Dorsolateral prefrontal cortex (tissue), 120 donors: ENCODE measurements at regions of chr1 and their contacts with region 1.

Region 1: DNA sequence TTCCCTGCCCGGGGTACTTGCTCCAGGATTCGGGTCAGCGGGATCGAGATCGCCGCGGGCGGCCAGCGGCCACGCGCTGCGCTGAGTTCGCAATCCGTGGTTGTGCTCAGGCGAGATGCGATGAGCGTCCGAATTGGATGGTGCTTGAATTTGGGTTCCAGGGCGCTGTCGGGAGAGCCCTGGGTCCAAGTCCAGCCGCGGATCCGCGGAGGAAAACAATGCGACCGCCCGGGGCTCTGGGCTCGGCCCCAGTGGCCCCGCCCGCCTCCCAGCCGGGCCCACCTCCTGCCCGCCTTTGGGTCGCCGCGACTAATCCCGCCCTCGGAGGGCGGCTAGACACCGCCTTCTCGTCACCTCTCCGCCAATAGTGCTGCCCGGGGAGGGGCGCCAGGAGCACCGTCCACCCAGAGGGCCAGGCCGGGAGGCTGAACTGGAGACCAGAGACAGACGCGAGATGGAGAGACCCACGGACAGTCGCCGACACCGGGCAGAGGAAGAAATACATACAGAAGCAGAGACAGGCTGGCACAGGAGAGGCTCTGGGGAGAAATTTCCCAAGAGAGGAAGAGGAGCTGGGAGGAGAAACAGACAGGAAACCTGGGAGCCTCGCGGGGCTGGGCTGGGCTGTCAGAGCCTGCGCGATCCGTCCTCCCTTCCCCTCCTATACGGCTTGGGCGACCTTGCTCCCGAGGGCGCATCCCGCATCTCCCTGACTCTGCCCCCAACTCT is at the start of gene SEMA6C:
- DNase-seq: peak; percentile 92 to 99 (median 96)
- H3K4me3 ChIP-seq: peak within 1 kb of the TSS; percentile 59 to 96 (median 84)
- H3K27ac ChIP-seq: peak within 1 kb of the TSS; percentile 31 to 93 (median 85)
- H3K27me3 ChIP-seq: no peaks in the 10 kb centered on the region
- CTCF ChIP-seq: peak in 25 of 56 donors; percentile 3 to 59 (median 23)
- total RNA-seq, gene SEMA6C: 12.8 to 41.0 (median 24.6) TPM

Region 2: GRCh38 chr1:151047925-151048645 is 98.5 kb before region 1 on chr1:
- intact Hi-C with region 1: loop called in 1 of 2 experiments (anchors 5 kb)
- DNase-seq: peak; percentile 53 to 84 (median 72)
- H3K4me3 ChIP-seq: peak overlapping the region; percentile 66 to 99 (median 88)
- H3K27ac ChIP-seq: peak overlapping the region; percentile 83 to 99 (median 94)
- H3K27me3 ChIP-seq: no peaks in the 10 kb centered on the region
- CTCF ChIP-seq: peak in 37 of 56 donors; percentile 19 to 62 (median 52)

Region 3: GRCh38 chr1:151059078-151059907 is 87.3 kb before region 1 on chr1 and contains the start of gene CDC42SE1:
- intact Hi-C with region 1: loop called in 1 of 2 experiments (anchors 5 kb)
- DNase-seq: peak; percentile 55 to 90 (median 82)
- H3K4me3 ChIP-seq: peak within 1 kb of the TSS; percentile 62 to 99 (median 87)
- H3K27ac ChIP-seq: peak within 1 kb of the TSS; percentile 82 to 99 (median 96)
- H3K27me3 ChIP-seq: no peaks in the 10 kb centered on the region
- CTCF ChIP-seq: peak; percentile 57 to 92 (median 76)
- total RNA-seq, gene CDC42SE1: 46.3 to 92.3 (median 62.6) TPM

Region 4: DNA sequence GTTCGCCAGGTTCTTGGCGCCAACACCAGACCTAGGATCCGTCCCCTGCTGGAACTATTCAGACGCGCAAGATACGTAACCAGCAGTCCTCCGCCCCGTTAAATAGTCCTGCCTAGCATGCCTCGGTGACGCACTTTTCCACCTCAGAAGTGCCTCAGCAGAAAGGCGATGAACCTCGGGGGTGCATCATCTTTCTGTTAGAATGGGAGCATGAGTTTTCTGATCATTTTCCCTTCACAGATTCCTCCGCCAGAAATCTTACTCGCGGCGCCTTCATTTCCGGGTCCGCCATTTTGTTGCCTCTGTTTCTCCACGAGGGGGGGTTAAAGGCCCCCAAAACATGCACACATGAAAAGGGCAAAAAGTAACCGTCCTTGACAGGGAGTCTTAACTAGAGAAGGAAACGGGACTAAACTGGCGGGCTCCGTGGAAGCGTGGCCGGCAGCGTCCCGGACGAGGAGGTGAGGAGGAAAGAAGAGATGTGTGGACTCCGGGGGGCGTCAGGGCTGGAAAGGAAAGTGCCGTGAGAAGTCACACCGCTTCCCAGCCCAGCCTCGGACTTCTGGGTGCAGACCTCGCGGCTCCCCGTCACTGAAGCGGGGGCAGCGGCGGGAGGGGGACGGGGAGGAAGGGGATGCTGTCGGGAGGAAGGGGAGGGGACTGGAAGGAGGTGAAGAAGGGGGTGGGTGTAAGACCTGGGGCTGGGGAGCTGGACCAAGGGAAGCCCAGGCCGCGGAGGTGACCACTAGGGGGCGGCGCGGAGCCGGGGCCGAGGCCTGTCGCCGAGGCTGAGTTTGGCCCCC is 75.9 kb before region 1 on chr1 and contains the start of gene GABPB2:
- intact Hi-C with region 1: loop called in 1 of 2 experiments (anchors 5 kb)
- DNase-seq: peak; percentile 84 to 94 (median 90)
- H3K4me3 ChIP-seq: peak within 1 kb of the TSS; percentile 52 to 98 (median 81)
- H3K27ac ChIP-seq: peak within 1 kb of the TSS; percentile 97 to 100 (median 100)
- H3K27me3 ChIP-seq: no peaks in the 10 kb centered on the region
- CTCF ChIP-seq: peak; percentile 56 to 98 (median 87)
- total RNA-seq, gene GABPB2: 11.6 to 37.2 (median 20.4) TPM

Region 5: DNA sequence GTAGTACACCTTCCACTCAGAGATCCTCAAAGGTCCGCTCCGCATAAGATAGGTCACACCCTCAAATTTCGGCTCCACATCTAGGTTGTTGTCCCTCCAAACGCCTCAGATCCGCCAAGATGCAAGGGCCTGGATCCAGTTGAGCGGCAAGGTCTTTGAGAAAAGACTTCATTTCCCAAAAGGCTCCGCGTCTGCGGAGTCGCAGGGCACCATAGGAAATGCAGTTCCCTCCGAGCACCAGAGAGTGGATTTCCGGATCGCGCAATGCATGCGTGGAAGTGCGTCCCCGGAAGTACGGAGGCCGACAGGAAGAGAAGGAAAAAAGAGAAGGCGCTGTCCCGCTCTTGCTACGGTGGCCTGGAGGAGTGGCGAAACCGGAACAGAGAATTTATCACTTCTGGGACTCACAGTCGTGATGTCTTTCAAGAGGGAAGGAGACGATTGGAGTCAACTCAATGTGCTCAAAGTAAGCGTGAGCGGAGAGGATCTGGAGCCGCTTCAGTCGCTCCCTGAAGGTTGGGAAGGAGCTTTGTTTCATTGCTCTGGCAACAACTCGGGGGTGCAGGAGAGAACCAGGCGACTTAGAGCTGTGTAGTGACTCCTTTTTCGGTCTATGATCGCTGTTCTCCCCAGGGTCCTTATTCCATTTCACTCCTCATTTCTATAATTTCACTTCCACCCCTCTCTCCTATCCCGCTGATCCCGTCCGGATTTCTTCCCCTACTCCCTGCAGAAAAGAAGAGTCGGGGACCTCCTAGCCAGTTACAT is 19.3 kb after region 1 on chr1 and contains the starts of genes LYSMD1 and SCNM1:
- intact Hi-C with region 1: loop called in 1 of 2 experiments (anchors 2 kb)
- DNase-seq: peak; percentile 94 to 98 (median 96)
- H3K4me3 ChIP-seq: peak within 1 kb of the TSS; percentile 57 to 98 (median 81)
- H3K27ac ChIP-seq: peak within 1 kb of the TSS; percentile 30 to 98 (median 89)
- H3K27me3 ChIP-seq: no peaks in the 10 kb centered on the region
- CTCF ChIP-seq: peak in 46 of 56 donors; percentile 7 to 64 (median 40)
- total RNA-seq, gene LYSMD1: 11.8 to 24.4 (median 17.1) TPM
- total RNA-seq, gene SCNM1: 20.8 to 38.5 (median 28.7) TPM

Region 6: DNA sequence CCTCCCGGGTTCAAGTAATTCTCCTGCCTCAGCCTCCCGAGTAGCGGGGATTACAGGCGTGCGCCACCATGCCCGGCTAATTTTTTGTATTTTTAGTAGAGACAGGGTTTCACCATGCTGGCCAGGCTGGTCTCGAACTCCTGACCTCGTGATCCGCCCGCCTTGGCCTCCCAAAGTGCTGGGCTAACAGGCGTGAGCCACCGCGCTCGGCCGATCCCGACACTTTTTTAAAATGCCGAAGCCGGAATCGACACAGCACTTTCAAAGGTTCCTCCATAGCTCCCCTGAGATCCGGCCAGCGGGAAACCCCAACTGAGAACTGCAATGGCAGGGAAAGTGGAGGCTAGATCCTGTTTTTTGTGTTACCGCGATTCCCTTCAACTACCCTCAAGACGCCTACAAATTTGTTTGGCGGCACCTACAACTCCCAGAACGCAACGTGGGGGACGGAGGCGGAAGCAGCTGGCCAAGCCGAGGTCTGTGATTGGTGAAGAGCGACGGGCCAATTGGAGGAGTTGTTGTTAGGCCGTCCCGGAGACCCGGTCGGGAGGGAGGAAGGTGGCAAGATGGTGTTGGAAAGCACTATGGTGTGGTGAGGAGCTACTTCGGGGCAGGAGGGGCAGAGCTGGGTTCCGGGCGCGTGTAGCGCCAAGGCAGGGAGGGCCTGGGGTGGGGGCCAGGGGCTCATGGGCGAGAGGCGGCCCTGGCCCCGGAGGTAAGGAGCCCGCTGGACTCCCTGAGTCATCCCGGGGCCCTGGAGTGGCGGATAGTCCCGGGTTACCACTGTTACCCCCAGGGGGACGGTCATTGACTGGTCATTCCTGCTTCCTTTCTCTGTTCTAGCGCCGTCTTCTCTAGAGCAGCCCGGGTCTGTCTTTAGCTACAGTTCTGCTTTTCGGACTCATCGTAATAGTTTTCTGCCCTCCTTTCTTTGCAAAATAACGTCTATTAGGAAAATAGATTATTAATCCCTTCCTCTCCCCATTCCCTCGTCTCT is 107.9 kb after region 1 on chr1 and contains the start of gene PSMD4:
- intact Hi-C with region 1: no loop called
- DNase-seq: peak; percentile 83 to 96 (median 94)
- H3K4me3 ChIP-seq: peak within 1 kb of the TSS; percentile 70 to 100 (median 97)
- H3K27ac ChIP-seq: peak within 1 kb of the TSS in 58 of 59 donors; percentile 28 to 96 (median 86)
- H3K27me3 ChIP-seq: no peaks in the 10 kb centered on the region
- CTCF ChIP-seq: peak in 32 of 56 donors; percentile 4 to 49 (median 28)
- total RNA-seq, gene PSMD4: 129 to 230 (median 181) TPM